Posterior vena cava (tissue), 2 donors: ENCODE measurements at regions of chr4 and their contacts with region 1.

Region 1: GRCh38 chr4:119615068-119615719 is 13.4 kb downstream of the PDE5A start:
- DNase-seq: no peak

Region 2: DNA sequence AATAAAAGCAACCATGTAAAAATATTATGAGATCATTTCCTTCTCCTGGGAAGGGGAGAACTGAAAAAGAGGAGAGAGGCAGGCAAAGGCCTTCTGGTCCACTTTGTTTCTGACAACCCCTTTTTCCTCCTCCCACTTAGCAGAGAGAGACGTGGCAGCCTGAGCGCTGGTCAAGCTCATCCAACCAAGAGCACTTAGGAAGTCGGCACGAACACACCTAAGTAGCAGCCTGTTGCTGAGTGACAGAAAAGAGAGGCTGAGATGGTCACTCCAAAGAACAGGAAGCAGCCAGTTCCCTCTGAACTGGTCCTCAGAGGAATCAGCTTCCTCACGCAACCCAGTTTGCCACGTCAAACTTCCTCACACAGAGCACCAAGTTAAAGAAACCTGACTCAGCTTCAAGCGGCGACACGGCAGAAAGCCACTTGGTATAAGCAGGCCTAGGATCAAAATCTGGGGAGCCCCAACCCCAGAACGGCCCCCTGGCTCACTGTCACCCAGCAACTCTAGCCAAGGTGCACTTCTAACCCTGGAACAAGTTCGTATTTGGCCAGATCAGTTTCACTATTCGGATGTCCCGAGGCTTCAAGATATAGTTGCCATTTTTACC is 780.1 kb before region 1 on chr4:
- intact Hi-C with region 1: loop called in 1 of 2 experiments (anchors 5 kb)
- DNase-seq: peak; percentile 90

Region 3: DNA sequence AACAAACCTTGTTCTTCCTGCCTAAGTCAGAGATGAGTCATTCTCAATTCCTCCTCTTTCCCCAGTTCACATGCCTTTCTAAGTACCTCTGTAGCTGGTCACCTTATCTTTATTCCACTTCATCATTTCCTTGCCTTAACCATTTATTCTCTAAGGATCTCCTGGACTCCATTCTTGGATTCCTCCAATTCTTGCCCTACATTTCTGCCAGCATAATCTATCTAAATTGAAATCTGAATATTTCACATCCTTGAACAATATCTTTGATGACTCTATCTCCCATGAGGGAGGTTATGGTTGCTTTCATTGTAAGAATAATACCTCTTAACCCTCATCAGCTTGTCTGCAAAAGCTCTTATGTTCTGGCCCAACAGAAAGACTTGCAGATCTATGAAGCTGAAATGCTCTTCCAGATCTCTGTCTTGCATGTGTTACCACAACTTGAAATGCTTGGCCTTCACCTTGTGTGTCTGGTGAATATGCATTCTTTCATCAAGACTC is 42.0 kb after region 1 on chr4:
- intact Hi-C with region 1: no loop called
- DNase-seq: no peak

Region 4: GRCh38 chr4:119785963-119786362 is 170.8 kb after region 1 on chr4:
- intact Hi-C with region 1: no loop called
- DNase-seq: no peak